Calu3 (cell line): ENCODE measurements at regions of chr3 and their contacts with region 1.

Region 1: GRCh38 chr3:27357665-27358258 is 11.4 kb downstream of the NEK10 start:
- DNase-seq: peak; percentile 69
- H3K4me3 Mint-ChIP-seq: no peak overlapping the region
- H3K27ac Mint-ChIP-seq: no peak overlapping the region
- H3K4me1 Mint-ChIP-seq: peaks cover 24% of the 10 kb centered on the region
- H3K27me3 Mint-ChIP-seq: no peaks in the 10 kb centered on the region
- CTCF ChIP-seq: no peak

Region 2: GRCh38 chr3:26058901-26059321 is 1298.9 kb before region 1 on chr3:
- CTCF ChIA-PET with region 1: interaction called, 14 read pairs
- intact Hi-C with region 1: no loop called
- DNase-seq: no peak
- H3K4me3 Mint-ChIP-seq: no peak overlapping the region
- H3K27ac Mint-ChIP-seq: no peak overlapping the region
- H3K4me1 Mint-ChIP-seq: no peaks in the 10 kb centered on the region
- H3K27me3 Mint-ChIP-seq: no peaks in the 10 kb centered on the region
- CTCF ChIP-seq: no peak

Region 3: DNA sequence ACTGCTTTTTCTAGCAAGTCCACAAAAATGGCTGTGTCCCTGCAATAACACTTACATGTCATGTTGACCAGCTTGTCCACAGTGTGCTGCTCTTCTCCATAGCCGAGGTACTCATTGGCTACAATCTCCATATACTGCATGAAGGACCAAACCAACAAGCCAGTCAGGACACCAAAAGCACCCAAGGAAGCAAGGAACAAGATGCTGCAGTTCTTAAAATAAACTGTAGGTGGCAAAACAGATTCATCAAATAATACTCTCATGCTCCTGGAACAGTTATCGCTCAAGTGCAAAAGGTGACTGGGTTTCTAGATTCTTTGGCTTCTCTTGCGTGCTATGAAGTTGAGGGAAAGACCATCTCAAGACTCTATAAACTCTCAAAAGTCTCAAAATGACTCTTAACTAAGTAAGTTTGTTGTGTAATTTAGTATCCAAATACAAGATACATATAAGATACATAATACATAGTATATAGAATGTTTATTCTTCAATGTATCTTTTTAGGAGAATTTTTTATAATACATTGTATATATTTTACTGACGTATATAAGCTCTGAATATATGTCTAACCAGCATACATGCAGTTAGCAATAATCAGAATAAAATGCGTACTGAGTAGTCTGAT is 45.6 kb before region 1 on chr3:
- CTCF ChIA-PET with region 1: no interaction called
- intact Hi-C with region 1: loop called (anchors 1 kb)
- DNase-seq: peak; percentile 26
- H3K4me3 Mint-ChIP-seq: no peak overlapping the region
- H3K27ac Mint-ChIP-seq: no peak overlapping the region
- H3K4me1 Mint-ChIP-seq: no peaks in the 10 kb centered on the region
- H3K27me3 Mint-ChIP-seq: no peaks in the 10 kb centered on the region
- CTCF ChIP-seq: peak; percentile 50

Region 4: DNA sequence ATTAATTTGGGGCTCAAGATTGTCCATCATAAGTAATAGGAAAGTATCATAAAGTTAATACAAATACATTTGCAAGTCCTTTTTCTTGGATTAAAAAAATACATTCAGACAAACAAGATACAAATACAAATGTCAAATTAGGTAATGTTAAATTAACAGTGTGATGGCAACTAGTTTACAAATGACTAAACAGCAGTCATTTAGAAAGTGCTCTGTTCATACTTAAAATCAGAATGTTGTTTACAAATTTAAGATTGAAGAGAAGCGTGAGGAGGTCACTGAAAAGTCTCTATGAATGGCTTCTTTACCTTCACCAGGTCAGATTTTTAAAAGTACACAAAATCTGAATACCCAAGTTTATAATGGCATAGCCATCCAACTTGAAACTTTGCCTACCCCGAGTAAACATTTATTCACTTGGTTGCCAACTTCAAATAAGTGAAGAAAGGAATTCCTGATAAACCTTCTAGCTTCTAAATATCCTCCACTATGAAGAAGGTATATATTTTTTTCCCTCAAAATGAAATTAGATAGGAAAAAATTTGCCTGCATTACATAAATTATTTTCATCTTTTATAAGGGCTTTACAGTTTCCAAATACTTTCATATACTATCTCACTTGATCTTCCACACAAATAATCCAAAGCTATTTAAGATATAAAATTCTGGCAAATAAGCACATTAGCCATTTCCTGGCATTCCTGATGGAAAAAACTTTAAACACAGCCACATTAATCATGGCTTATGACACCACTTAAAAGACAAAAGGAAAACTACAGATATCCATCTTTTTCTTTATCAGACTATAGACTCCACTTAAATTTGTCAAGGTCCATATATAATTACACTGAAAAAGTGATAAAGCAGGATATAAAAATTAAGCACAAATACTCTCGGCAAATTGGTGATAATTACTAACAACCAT is 22.9 kb after region 1 on chr3:
- CTCF ChIA-PET with region 1: no interaction called
- intact Hi-C with region 1: no loop called
- DNase-seq: no peak
- H3K4me3 Mint-ChIP-seq: no peak overlapping the region
- H3K27ac Mint-ChIP-seq: no peak overlapping the region
- H3K4me1 Mint-ChIP-seq: no peaks in the 10 kb centered on the region
- H3K27me3 Mint-ChIP-seq: no peaks in the 10 kb centered on the region
- CTCF ChIP-seq: no peak